ENCODE measurements at regions of chr17 and their contacts with region 1.

Region 1: DNA sequence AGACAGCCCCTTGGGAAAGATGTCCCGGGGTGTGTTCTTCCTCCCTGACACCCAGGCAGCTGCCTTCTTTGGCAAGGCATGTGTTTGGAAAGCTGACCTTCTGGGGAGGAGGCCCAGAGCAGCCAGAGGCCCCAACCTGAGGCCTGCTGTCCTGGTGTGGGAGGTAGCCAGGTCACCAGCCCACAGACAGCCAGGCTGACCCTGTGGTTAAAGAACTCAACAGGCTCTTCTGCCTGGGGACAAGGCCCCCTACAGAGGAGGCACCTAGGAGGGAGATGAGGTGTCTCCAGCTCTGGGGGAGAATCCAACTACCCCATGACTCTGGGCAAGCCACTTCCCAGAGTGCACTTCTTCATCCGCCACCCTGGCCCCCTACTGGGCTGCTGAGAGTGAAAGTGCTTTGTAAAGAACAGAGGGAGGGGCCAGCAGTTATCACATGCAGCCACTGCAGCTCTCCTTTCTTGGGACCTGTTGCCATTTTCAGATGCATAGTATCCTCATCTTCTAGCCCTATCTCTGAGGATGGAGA is 13.1 kb upstream of the SREBF1 start:
- DNase-seq: peak; percentile 61 to 63
- H3K4me3 ChIP-seq: no peak overlapping the region
- H3K27ac ChIP-seq: peak overlapping the region; percentile 44 to 73
- H3K4me1 ChIP-seq: peaks cover 0 to 7% of the 10 kb centered on the region in 2 donors
- H3K27me3 ChIP-seq: no peaks in the 10 kb centered on the region
- CTCF ChIP-seq: peak in 3 of 4 experiments; percentile 16 to 18 (median 16)
- POLR2A ChIP-seq: no peak

Region 2: DNA sequence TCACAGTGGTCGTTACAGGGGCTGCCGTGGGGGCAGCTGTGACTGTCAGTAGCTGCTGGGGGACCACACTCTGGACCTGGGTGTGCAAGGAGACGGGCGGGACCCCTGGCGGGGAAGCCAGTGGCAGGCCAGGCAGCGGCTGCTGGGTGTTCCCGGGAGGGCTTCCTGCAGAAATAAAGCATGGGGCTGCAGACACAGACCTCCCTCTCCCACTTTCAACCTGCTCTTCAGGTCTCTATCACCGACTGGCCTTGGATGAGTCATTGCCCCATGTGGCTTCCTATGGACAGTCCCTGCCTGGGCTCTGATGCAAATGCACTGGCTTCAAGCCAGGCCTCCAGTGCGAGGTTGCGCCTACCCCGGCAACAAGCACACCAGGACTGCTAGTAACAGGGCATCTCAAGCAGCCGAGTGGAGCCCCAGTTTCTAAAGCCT is 30.3 kb before region 1 on chr17:
- intact Hi-C with region 1: loop called (anchors 5 kb)
- DNase-seq: peak in 1 of 2 donors; percentile 67
- H3K4me3 ChIP-seq: no peak overlapping the region
- H3K27ac ChIP-seq: no peak overlapping the region
- H3K4me1 ChIP-seq: peaks cover 9 to 18% of the 10 kb centered on the region in 2 donors
- H3K27me3 ChIP-seq: no peaks in the 10 kb centered on the region
- CTCF ChIP-seq: no peak
- POLR2A ChIP-seq: no peak

Region 3: DNA sequence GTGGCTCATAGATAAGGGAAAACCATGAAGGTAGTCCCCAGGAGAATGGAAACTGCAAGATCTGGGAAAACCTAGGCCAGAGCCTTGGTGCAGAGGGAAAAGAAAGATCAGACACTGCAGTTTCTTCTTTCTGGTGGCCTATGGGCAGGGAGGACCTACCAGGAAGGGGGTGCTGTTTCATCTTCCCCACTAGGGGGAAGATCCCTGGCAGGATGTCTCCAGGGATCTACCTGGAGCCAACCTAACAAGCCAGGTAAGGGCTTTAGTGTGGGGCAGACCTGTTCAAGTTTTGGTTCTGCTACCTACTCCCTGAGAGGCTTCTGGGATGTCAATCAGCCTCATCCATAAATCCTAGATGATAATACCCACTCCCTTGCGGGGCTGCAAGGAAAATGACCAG is 100.9 kb after region 1 on chr17:
- intact Hi-C with region 1: no loop called
- DNase-seq: no peak
- H3K4me3 ChIP-seq: no peak overlapping the region
- H3K27ac ChIP-seq: no peak overlapping the region
- H3K4me1 ChIP-seq: no peaks in the 10 kb centered on the region
- H3K27me3 ChIP-seq: no peaks in the 10 kb centered on the region
- CTCF ChIP-seq: no peak
- POLR2A ChIP-seq: no peak